MCF 10A (cell line): ENCODE measurements at regions of chr11 and their contacts with region 1.

Region 1: GRCh38 chr11:76919887-76920746 is 59.4 kb downstream of the ACER3 start:
- DNase-seq: peak; percentile 82
- H3K4me3 Mint-ChIP-seq: no peak overlapping the region
- H3K27ac Mint-ChIP-seq: no peak overlapping the region
- H3K4me1 Mint-ChIP-seq: no peaks in the 10 kb centered on the region
- H3K27me3 Mint-ChIP-seq: no peaks in the 10 kb centered on the region
- CTCF ChIP-seq: peak; percentile 79

Region 2: DNA sequence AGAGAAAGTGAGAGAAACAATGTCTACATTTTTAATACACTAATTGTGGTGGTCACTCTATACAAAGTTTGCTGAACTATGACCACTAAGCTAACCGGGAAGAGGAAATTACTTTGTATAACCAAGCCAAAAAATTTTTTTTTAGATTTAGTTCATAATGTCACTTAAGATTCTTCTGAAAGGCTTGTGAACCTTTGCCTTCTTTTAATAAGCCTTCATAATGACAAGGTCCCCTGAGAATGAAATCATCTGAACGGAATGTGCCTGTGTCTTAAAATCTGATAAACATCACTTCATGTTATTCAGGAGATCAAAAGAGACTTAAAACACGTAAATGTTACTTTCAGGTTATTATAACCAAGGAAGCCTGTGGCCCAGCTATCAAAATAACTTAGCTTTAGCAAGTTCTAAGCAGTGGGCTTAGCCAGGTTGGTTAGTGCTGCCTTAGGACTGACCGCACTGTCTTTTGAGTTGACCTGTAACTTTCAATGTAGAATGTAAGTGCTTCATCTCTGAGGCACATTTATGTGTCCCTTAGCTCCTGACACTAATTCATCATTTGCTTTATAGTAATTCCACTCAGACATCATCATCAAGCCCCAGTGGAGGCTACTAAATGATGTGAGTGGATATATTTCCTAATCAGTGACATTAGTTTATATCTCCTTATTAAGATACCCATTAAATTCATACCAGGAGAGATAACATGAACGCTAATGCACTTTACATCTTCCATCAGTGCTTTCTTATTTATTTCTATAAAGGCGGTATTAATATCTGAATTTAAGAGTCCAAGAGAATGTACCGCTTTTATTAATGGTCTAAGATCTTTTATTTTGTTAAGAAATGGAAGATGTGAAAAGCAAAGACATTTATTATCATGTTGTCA is 836.3 kb before region 1 on chr11:
- CTCF ChIA-PET with region 1: no interaction called
- POLR2A ChIA-PET with region 1: no interaction called
- intact Hi-C with region 1: no loop called
- DNase-seq: no peak
- H3K4me3 Mint-ChIP-seq: no peak overlapping the region
- H3K27ac Mint-ChIP-seq: peak overlapping the region; percentile 35
- H3K4me1 Mint-ChIP-seq: peaks cover 11% of the 10 kb centered on the region
- H3K27me3 Mint-ChIP-seq: no peaks in the 10 kb centered on the region
- CTCF ChIP-seq: no peak

Region 3: DNA sequence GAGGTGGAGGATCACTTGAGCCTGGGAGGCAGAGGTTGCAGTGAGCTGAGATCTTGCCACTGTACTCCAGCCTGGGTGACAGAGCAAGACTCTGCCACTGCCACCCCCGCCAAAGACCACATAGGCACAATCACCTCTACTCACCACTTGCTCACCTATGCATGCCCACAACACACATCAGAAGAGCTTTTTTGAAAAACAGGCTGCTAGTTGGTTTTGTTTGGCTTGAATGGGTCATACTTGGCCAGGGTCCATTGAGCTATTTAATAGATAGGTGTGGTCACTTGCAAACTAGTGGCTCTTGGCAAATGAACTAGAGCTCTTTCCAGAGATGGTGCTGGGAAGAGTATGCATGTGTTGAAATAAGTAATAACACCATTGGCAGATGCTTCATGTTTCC is 395.2 kb before region 1 on chr11:
- CTCF ChIA-PET with region 1: no interaction called
- POLR2A ChIA-PET with region 1: no interaction called
- intact Hi-C with region 1: no loop called
- DNase-seq: peak; percentile 78
- H3K4me3 Mint-ChIP-seq: no peak overlapping the region
- H3K27ac Mint-ChIP-seq: no peak overlapping the region
- H3K4me1 Mint-ChIP-seq: peaks cover 11% of the 10 kb centered on the region
- H3K27me3 Mint-ChIP-seq: no peaks in the 10 kb centered on the region
- CTCF ChIP-seq: no peak

Region 4: DNA sequence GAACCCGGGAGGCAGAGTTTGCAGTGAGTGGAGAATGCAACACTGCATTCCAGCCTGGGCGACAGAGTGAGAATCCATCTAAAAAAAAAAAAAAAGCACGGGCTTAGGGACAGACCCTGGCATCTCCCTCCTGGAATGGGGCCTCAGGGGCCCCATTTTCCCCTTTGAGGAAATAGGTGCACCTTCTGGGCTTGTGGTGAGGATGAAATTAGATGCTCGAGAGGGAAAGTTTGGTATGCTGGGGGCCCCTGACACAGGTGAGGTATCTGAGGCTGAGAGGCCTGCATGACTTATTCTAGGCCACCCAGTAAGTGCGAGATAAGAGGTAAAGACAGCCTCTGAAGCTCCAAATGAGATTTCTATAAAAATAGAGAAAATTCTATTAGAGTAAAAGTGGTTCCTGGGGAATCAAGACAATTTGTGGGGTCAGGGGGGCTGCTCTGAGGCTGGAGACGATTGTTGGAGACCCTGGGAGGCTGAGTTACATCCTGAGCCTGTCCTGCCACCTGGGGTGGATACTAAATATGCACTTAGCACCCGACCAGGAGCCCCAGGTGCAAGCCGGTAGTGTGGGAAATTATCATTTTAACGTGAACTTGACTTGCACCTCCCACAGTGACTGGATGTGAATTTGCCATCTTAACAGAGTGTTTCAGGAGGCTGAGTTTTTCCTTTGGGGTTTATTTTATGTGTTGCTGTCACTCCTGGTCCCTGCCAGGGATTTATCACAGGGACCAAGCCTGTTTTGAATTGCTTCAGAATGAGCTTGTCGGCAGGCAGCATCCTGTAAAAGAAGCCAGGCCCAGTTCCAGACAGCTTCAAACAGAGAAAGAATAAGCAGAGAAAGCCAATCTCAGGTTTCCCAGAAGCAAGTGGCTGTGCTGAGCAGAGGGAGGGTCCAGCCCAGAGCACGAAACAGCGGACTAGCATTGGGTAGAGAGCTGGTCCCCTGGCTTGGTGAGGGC is 185.4 kb before region 1 on chr11:
- CTCF ChIA-PET with region 1: interaction called, 61 read pairs
- POLR2A ChIA-PET with region 1: interaction called, 4 read pairs
- intact Hi-C with region 1: no loop called
- DNase-seq: no peak
- H3K4me3 Mint-ChIP-seq: no peak overlapping the region
- H3K27ac Mint-ChIP-seq: no peak overlapping the region
- H3K4me1 Mint-ChIP-seq: no peaks in the 10 kb centered on the region
- H3K27me3 Mint-ChIP-seq: peaks cover 13% of the 10 kb centered on the region
- CTCF ChIP-seq: no peak

Region 5: DNA sequence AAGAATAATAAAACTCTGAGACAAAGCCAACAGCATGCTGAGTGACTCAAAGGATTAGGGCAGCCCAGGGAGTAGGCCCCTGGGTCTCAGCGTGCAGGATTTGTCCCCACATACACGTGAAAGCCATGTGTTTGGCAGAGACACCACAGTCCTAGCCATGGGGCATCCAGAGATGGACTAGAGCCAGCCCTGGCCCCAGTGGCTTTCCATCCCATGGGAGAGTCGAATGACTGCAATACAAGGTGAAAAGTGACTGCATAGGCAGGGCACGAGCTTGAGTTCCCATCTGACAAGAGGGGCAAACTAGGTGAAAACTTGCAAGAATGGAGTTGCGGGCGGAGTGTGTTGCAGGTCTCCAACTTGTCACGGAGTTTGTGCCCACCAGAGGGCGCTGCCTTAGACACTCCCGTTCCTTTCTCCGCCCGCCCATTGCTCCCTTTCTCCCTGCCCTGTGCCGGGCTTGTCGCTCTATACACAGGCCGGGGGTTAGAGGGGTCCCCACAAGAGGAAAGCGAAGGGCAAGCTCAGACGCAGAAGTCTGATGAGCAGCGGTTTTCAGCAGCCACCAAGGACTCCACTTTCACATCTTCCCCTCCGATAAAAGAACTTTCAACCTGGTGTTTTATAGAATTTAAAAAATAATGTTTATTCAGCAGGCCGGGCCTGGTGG is 112.8 kb before region 1 on chr11:
- CTCF ChIA-PET with region 1: interaction called, 170 read pairs
- POLR2A ChIA-PET with region 1: interaction called, 11 read pairs
- intact Hi-C with region 1: loop called (anchors 1 kb)
- DNase-seq: peak; percentile 87
- H3K4me3 Mint-ChIP-seq: no peak overlapping the region
- H3K27ac Mint-ChIP-seq: no peak overlapping the region
- H3K4me1 Mint-ChIP-seq: peaks cover 37% of the 10 kb centered on the region
- H3K27me3 Mint-ChIP-seq: no peaks in the 10 kb centered on the region
- CTCF ChIP-seq: peak; percentile 84

Region 6: DNA sequence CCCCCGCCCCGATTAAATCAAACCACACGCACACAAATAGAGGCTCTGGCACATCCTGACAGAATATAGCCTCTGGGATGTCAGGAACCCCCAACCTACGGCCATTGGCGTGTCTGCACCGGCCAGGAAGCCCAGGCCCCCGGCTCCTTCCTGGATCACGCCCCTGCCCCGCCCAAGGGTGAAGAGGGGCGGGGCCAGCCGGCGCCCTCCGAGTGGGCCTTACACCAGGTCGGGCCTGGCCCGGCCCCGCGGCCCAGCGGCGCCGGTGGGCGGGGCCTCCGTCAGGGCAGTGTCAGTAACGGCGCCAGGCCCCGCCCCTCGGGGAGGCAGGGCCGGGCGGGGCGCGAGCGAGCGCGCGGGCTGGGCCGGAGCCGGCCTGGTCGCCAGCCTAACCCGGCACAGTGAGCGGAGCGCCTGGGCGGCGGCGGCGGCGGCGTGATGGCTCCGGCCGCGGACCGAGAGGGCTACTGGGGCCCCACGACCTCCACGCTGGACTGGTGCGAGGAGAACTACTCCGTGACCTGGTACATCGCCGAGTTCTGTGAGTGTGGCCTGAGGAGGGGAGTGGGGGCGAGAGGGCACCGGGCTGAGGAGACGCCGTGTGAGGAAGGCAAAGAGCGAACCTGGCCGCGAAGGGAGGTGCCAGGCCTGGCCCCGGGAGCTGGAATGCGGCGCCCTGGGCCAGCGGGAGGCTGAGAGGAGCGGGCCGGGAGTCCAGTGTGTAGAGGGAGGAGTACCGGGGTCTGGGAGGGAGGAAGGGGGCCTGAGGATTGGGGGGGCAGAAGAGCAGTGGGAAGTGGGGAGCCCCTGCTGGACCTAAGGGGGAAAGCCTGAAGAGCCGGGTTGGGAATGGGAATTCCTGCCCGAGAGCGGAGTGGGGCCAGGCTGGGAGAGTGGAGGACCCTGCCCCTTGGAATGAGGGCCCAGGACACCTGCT is 59.3 kb before region 1 on chr11 and contains the start of gene ACER3:
- CTCF ChIA-PET with region 1: interaction called, 15 read pairs
- POLR2A ChIA-PET with region 1: no interaction called
- intact Hi-C with region 1: loop called (anchors 2 kb)
- DNase-seq: peak; percentile 89
- H3K4me3 Mint-ChIP-seq: peak within 1 kb of the TSS; percentile 85
- H3K27ac Mint-ChIP-seq: peak within 1 kb of the TSS; percentile 84
- H3K4me1 Mint-ChIP-seq: peaks cover 24% of the 10 kb centered on the region
- H3K27me3 Mint-ChIP-seq: no peaks in the 10 kb centered on the region
- CTCF ChIP-seq: peak; percentile 22
- total RNA-seq, gene ACER3: 12.7 and 13.8 TPM in 2 replicates

Region 7: DNA sequence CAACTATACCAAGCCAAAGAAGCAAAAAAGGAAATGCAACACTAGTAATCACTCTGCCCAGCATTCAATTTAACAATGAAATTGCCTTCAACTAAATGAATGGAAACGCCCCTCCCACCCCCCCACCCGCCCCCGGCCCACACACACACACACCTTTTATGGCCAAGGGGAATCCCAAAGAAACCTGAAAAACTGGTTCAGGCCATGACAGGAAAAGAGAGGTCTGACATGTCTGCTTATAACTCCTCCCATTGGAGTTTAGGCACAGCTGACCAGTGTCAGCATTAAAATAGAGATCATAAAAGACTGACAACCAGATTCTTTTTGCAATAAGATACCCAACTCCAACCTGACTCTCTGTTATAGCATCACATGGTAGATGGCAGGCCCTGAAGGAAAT is 16.8 kb before region 1 on chr11:
- CTCF ChIA-PET with region 1: interaction called, 64 read pairs
- POLR2A ChIA-PET with region 1: no interaction called
- intact Hi-C with region 1: no loop called
- DNase-seq: no peak
- H3K4me3 Mint-ChIP-seq: no peak overlapping the region
- H3K27ac Mint-ChIP-seq: no peak overlapping the region
- H3K4me1 Mint-ChIP-seq: no peaks in the 10 kb centered on the region
- H3K27me3 Mint-ChIP-seq: no peaks in the 10 kb centered on the region
- CTCF ChIP-seq: no peak

Region 8: DNA sequence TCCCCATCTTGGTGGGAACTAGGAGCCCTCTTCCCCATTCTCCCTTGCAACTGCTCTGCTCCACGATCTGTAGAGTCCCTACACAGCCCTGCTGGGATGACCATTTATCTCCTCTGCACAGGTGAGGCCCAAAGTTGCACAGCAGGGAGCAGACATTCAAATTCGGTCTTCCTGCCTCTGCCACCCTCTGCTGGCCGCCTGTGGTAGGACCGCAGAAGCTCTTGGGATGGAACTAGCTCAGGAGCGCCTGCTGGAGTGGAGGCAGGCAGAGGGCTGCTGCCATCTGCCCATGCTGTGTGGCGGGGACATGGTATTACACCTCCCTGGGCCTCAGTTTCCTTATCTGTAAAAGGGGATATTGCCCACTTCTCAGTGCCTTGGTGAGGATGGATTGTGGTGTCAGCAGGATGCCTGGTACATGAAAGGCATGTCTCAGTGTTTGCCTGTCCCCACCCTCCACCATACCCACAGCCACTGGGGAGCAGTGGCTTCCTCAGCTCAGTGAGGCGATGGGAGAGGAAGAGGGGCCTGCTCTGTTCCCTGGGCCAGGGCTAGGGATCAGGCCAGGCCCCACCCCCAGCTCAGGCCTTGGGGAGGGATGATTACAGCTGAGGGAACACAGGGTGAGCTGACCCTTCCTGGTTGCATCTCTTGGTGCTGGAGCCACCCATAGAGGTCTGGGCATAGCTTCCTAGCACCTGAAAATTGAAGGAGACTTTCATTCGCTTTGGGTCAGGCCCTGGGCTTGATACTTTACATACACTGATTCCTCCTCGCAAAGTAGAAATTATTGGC is 171.2 kb after region 1 on chr11:
- CTCF ChIA-PET with region 1: interaction called, 108 read pairs
- POLR2A ChIA-PET with region 1: interaction called, 4 read pairs
- intact Hi-C with region 1: loop called (anchors 1 kb)
- DNase-seq: peak; percentile 77
- H3K4me3 Mint-ChIP-seq: no peak overlapping the region
- H3K27ac Mint-ChIP-seq: no peak overlapping the region
- H3K4me1 Mint-ChIP-seq: no peaks in the 10 kb centered on the region
- H3K27me3 Mint-ChIP-seq: no peaks in the 10 kb centered on the region
- CTCF ChIP-seq: peak; percentile 81